Activated CD8-positive, alpha-beta T cell treated with anti-CD3 and anti-CD28 coated beads, Interleukin-2, amount 10 ng/mL, durations not matched to agents 7 days and 5 days (primary cell): ENCODE measurements at regions of chr6 and their contacts with region 1.

Region 1: DNA sequence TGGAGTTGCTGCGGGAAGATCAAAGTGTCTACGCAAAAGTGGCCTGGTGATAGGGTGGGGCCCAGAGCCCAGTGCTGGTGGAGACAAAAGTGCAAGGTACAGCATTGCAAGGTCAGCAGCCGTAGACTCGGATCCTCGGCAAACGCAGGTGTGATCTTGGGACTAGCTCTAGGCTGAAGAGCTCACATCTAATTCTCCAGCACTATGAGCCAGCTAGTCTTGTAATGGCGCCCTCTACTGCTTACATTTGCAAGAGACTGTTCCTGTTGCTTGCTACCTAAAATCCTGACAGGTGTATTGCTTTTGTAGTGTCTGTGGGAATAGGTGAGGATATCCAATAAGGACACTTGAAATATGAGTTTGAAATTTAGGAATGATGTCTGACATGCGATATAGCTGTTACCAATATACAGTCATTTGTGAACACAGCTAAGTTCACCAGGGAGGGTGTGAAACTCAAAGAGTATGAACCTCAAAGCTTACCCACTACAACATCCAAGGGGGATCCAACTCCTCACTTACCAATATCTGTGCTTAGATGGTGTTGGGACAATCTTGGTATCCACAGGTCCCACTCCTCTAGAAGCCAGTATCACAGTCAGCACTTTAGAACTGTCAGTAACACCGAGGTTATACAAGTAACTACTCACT is 58.4 kb downstream of the PDE7B start:
- DNase-seq: peak; percentile 77
- ATAC-seq: peak; percentile 96
- H3K4me3 Mint-ChIP-seq: no peak overlapping the region
- H3K27ac Mint-ChIP-seq: no peak overlapping the region
- H3K4me1 Mint-ChIP-seq: peaks cover 5% of the 10 kb centered on the region
- H3K27me3 Mint-ChIP-seq: no peaks in the 10 kb centered on the region

Region 2: DNA sequence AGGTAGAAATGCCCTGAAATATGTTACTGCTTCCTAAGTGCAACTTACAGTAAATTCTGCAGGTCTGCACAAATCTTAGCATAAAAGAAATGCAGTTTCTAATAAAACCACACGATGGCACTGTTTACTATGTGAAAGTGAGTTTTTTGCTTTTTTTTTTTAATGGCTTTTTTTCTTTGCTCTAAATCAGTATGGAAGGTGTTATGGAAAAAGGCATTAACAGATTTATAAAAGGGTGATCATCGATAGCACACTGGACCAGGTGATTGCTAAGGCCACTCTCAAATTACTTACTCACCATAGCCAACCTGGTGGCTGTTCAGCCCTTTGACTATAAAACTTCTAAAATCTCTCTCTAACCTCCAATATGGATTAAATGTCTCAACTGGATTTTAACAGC is 458.2 kb before region 1 on chr6:
- CTCF ChIA-PET with region 1: interaction called, 11 read pairs
- POLR2A ChIA-PET with region 1: no interaction called
- DNase-seq: no peak
- ATAC-seq: peak; percentile 30
- H3K4me3 Mint-ChIP-seq: no peak overlapping the region
- H3K27ac Mint-ChIP-seq: no peak overlapping the region
- H3K4me1 Mint-ChIP-seq: no peaks in the 10 kb centered on the region
- H3K27me3 Mint-ChIP-seq: no peaks in the 10 kb centered on the region

Region 3: GRCh38 chr6:135675862-135676261 is 234.0 kb before region 1 on chr6:
- CTCF ChIA-PET with region 1: interaction called, 29 read pairs
- POLR2A ChIA-PET with region 1: no interaction called
- DNase-seq: peak; percentile 58
- ATAC-seq: peak; percentile 55
- H3K4me3 Mint-ChIP-seq: no peak overlapping the region
- H3K27ac Mint-ChIP-seq: no peak overlapping the region
- H3K4me1 Mint-ChIP-seq: peaks cover 27% of the 10 kb centered on the region
- H3K27me3 Mint-ChIP-seq: no peaks in the 10 kb centered on the region

Region 4: GRCh38 chr6:135686784-135687301 is 223.0 kb before region 1 on chr6:
- CTCF ChIA-PET with region 1: interaction called, 14 read pairs
- POLR2A ChIA-PET with region 1: no interaction called
- DNase-seq: no peak
- ATAC-seq: no peak
- H3K4me3 Mint-ChIP-seq: no peak overlapping the region
- H3K27ac Mint-ChIP-seq: no peak overlapping the region
- H3K4me1 Mint-ChIP-seq: peaks cover 10% of the 10 kb centered on the region
- H3K27me3 Mint-ChIP-seq: no peaks in the 10 kb centered on the region

Region 5: GRCh38 chr6:135851442-135852271 is 58.2 kb before region 1 on chr6 and contains the start of gene PDE7B:
- CTCF ChIA-PET with region 1: interaction called, 24 read pairs
- POLR2A ChIA-PET with region 1: no interaction called
- DNase-seq: peak; percentile 61
- ATAC-seq: peak; percentile 97
- H3K4me3 Mint-ChIP-seq: peak within 1 kb of the TSS; percentile 66
- H3K27ac Mint-ChIP-seq: peak within 1 kb of the TSS; percentile 70
- H3K4me1 Mint-ChIP-seq: peaks cover 13% of the 10 kb centered on the region
- H3K27me3 Mint-ChIP-seq: no peaks in the 10 kb centered on the region
- total RNA-seq, gene PDE7B: 0.29 to 0.34 TPM

Region 6: GRCh38 chr6:135938576-135939207 is 28.8 kb after region 1 on chr6:
- CTCF ChIA-PET with region 1: no interaction called
- POLR2A ChIA-PET with region 1: no interaction called
- DNase-seq: no peak
- ATAC-seq: no peak
- H3K4me3 Mint-ChIP-seq: no peak overlapping the region
- H3K27ac Mint-ChIP-seq: no peak overlapping the region
- H3K4me1 Mint-ChIP-seq: no peaks in the 10 kb centered on the region
- H3K27me3 Mint-ChIP-seq: no peaks in the 10 kb centered on the region

Region 7: DNA sequence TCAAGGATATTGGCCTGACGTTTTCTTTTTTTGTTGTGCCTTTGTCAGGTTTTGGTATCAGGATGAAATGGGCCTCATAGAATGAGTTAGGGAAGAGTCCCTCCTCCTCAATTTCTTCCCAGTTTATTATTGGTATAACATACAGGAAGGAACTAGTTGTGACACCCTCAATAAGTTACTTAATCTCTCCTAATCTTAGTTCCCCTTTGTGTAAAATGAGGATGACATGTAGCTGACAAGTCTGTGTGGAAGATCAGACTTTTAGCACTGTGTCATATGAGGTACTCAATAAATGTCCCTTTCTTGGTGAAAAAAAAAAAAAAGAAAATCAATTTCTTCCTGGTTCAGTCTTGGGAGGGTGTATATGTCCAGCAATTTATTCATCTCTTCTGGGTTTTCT is 97.5 kb after region 1 on chr6:
- CTCF ChIA-PET with region 1: no interaction called
- POLR2A ChIA-PET with region 1: no interaction called
- DNase-seq: no peak
- ATAC-seq: no peak
- H3K4me3 Mint-ChIP-seq: no peak overlapping the region
- H3K27ac Mint-ChIP-seq: no peak overlapping the region
- H3K4me1 Mint-ChIP-seq: no peaks in the 10 kb centered on the region
- H3K27me3 Mint-ChIP-seq: no peaks in the 10 kb centered on the region

Region 8: DNA sequence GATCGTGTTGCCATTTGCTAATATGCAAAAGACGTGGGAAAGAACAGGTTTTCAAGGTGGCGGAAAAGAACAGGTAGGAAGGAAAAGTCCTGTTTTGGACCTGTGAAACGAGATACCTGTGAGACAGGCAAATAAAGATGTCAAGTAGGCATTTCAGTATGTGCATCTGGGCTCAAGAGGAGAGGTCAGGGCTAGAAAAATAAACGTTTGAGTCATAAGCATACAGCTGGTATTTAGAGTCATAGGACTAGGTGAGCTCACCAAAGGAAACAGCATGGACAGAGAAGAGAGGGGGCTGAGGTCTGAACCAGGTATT is 325.3 kb after region 1 on chr6:
- CTCF ChIA-PET with region 1: no interaction called
- POLR2A ChIA-PET with region 1: no interaction called
- DNase-seq: no peak
- ATAC-seq: no peak
- H3K4me3 Mint-ChIP-seq: no peak overlapping the region
- H3K27ac Mint-ChIP-seq: no peak overlapping the region
- H3K4me1 Mint-ChIP-seq: peaks cover 19% of the 10 kb centered on the region
- H3K27me3 Mint-ChIP-seq: no peaks in the 10 kb centered on the region